Tibial artery (tissue), 4 donors: ENCODE measurements at regions of chr20 and their contacts with region 1.

Region 1: GRCh38 chr20:62136283-62137091 is 6.7 kb downstream of the PSMA7 start:
- DNase-seq: peak; percentile 70 to 81
- H3K4me3 ChIP-seq: no peak overlapping the region
- H3K27ac ChIP-seq: no peak overlapping the region
- H3K4me1 ChIP-seq: peaks cover under 1 to 17% (median 12%) of the 10 kb centered on the region in 4 donors
- H3K27me3 ChIP-seq: no peaks in the 10 kb centered on the region
- CTCF ChIP-seq: peak; percentile 66 to 74

Region 2: GRCh38 chr20:62010551-62011402 is 125.7 kb before region 1 on chr20:
- intact Hi-C with region 1: loop called (anchors 5 kb)
- DNase-seq: no peak
- H3K4me3 ChIP-seq: no peak overlapping the region
- H3K27ac ChIP-seq: no peak overlapping the region
- H3K4me1 ChIP-seq: peaks cover 0 to 5% (median 0%) of the 10 kb centered on the region in 4 donors
- H3K27me3 ChIP-seq: no peaks in the 10 kb centered on the region
- CTCF ChIP-seq: peak; percentile 58 to 69

Region 3: GRCh38 chr20:62025832-62026563 is 110.5 kb before region 1 on chr20:
- intact Hi-C with region 1: loop called (anchors 5 kb)
- DNase-seq: no peak
- H3K4me3 ChIP-seq: no peak overlapping the region
- H3K27ac ChIP-seq: no peak overlapping the region
- H3K4me1 ChIP-seq: peaks cover 0 to 32% (median 14%) of the 10 kb centered on the region in 4 donors
- H3K27me3 ChIP-seq: no peaks in the 10 kb centered on the region
- CTCF ChIP-seq: peak; percentile 40 to 44